Activated T-helper 1 cell treated with anti-CD3 and anti-CD28 coated beads, Interleukin-12 subunit alpha, Interleukin-12 subunit beta, Interleukin-2, Interleukin-4 antibody, amounts not matched to agents 30 ng/mL and 10 ng/mL and 1 ng/mL, durations not matched to agents 14 hours and 24 hours and 36 hours (primary cell): ENCODE measurements at regions of chr10 and their contacts with region 1.

Region 1: DNA sequence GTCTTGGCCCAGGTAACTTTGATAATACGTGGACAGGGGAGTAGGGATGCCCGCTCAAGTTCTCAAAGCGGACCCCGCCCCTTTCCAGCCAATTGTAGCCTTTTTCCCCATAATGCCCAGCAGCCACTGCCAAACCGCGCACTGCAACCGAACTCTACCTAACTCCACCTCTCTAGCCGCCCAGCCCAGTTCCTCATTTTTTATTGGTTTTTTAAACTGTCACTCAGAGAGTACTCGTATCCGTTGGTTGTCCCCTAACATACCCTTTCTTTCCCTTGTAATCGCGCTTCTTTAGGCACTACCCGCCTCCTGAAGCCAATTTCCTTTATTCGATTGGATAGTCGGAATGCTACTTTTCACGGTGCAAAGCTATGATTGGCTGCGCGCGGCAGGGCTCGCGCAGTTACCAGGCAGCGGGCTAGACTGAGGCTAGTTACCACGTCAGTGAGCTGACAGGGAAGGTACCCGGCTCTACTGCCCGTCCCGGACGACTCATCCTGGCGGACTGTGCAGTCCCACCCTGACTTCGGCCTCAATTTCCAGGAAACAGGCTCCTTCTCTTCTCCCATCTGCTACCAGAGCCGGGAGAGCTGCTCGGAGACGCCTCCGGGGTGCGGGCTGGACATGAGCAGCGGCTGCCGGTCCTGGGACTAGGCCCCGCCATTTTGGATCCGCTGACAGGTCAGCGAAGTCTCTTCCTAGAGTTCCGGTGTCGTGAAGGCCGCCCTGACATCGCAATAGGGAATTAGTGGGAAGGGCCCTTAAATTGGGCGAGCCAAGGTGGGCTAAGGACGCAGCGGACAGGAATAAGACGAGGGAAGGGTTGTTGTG is at the start of gene GBF1:
- DNase-seq: peak; percentile 90
- H3K4me3 Mint-ChIP-seq: peak within 1 kb of the TSS; percentile 96
- H3K27ac Mint-ChIP-seq: peak within 1 kb of the TSS; percentile 91
- H3K4me1 Mint-ChIP-seq: peaks cover 38% of the 10 kb centered on the region
- H3K27me3 Mint-ChIP-seq: peaks cover 9% of the 10 kb centered on the region
- total RNA-seq, gene GBF1: 46.7 TPM in 2 replicates

Region 2: DNA sequence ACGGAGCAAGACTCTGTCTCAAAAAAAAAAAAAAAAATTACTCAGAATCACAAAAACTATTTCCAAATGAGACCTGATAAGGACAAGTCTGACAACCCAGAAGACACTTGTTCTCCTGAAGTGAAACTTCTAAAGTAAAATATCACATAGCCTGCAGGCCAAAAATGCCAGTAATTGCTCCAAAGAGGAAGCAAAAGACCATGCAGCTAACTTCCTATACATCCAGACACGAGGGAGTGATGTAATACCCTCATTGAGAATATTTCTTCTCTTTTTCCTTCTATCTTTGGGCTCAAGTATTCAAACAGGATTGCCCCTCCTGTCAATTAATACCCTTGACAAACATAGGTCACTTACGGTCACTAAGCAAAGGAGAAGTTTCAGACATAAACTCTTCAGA is 220.5 kb before region 1 on chr10:
- intact Hi-C with region 1: no loop called
- DNase-seq: no peak
- H3K4me3 Mint-ChIP-seq: no peak overlapping the region
- H3K27ac Mint-ChIP-seq: no peak overlapping the region
- H3K4me1 Mint-ChIP-seq: no peaks in the 10 kb centered on the region
- H3K27me3 Mint-ChIP-seq: no peaks in the 10 kb centered on the region

Region 3: GRCh38 chr10:102132563-102133372 is 112.5 kb before region 1 on chr10 and contains the start of gene PPRC1:
- intact Hi-C with region 1: loop called (anchors 1 kb)
- DNase-seq: peak; percentile 97
- H3K4me3 Mint-ChIP-seq: peak within 1 kb of the TSS; percentile 95
- H3K27ac Mint-ChIP-seq: peak within 1 kb of the TSS; percentile 94
- H3K4me1 Mint-ChIP-seq: peaks cover 29% of the 10 kb centered on the region
- H3K27me3 Mint-ChIP-seq: no peaks in the 10 kb centered on the region
- total RNA-seq, gene PPRC1: 112 and 115 TPM in 2 replicates

Region 4: GRCh38 chr10:102159051-102159597 is 86.2 kb before region 1 on chr10:
- intact Hi-C with region 1: no loop called
- DNase-seq: no peak
- H3K4me3 Mint-ChIP-seq: no peak overlapping the region
- H3K27ac Mint-ChIP-seq: no peak overlapping the region
- H3K4me1 Mint-ChIP-seq: peaks cover 15% of the 10 kb centered on the region
- H3K27me3 Mint-ChIP-seq: no peaks in the 10 kb centered on the region

Region 5: DNA sequence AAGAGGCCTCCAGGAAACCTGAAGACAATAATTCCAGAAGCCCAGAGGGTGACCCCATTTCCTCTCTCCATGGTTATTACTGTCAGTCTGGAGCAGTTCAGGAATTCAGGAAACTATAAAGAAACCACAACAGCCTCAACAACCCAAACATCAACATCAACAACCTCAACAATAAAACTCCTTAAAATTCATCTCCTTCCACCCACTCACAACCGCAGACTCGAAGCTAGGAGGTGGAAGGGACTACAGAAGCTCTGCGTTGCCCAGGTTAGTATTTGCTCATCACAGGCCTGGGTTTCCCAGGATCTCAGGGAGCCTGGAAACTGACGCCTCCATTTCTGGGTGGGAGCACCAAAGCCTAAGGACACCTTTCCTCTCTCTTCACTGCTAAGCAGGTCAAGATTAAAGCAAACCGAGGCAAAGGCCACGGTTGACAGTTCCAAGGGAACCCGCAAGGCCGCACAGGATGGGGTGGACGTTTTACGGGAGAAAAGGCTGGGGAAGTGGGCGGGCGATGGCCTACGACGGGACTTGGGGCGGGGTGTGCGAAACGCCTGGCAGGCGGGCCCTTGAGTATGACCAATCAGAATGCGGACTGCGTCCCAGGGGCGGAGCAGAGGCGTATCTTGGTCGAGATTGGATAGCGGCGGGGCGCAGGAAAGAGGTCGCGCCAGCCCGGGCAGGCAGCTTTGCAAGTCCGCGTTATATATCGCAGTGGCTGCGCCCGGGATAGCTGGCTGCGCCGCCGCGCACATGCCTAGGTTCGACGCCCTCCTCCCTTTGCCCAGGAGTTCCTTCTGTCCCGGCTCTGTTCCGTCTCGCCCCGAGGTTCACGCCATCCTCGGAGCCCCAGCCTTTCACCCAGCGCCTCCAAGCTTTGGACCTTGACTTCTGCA is 19.4 kb before region 1 on chr10 and contains the start of gene ELOVL3:
- intact Hi-C with region 1: loop called (anchors 1 kb)
- DNase-seq: peak; percentile 87
- H3K4me3 Mint-ChIP-seq: peak within 1 kb of the TSS; percentile 63
- H3K27ac Mint-ChIP-seq: no peak within 1 kb of the TSS
- H3K4me1 Mint-ChIP-seq: peaks cover 21% of the 10 kb centered on the region
- H3K27me3 Mint-ChIP-seq: peaks cover 57% of the 10 kb centered on the region
- total RNA-seq, gene ELOVL3: 0.18 TPM in 1 of 2 replicates, not detected in the other

Region 6: DNA sequence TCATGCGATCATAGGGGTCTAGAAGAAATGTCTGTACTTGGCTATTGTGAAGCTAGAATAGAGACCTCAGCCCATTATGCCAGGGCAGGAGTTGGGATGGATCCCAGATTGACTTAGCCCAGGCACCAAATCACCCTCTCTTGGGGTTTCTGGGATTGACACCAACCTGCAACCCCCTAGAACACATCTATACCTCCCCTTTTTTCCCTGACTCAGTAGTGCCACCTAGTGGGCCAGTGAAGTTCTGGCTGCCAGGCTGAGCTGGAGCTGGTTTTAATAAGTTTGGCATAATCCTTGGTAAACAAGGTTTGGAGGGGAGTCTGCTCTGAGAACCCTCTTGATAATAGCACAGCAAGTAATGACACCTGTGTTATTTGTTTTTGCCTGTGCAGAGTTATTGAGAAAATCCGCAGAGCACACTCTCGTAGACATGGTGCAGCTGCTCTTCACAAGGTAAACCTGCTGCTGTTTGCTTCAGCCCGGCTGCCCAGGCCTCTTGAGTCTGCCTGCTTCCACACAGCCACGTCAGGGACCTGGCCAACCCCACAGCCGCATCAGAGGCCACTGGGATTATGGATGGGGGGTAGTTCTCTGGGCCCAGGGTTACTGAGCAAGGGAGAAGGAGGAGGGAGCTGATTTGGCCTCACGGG is 106.9 kb after region 1 on chr10:
- intact Hi-C with region 1: loop called (anchors 1 kb)
- DNase-seq: peak; percentile 41
- H3K4me3 Mint-ChIP-seq: no peak overlapping the region
- H3K27ac Mint-ChIP-seq: no peak overlapping the region
- H3K4me1 Mint-ChIP-seq: no peaks in the 10 kb centered on the region
- H3K27me3 Mint-ChIP-seq: no peaks in the 10 kb centered on the region

Region 7: DNA sequence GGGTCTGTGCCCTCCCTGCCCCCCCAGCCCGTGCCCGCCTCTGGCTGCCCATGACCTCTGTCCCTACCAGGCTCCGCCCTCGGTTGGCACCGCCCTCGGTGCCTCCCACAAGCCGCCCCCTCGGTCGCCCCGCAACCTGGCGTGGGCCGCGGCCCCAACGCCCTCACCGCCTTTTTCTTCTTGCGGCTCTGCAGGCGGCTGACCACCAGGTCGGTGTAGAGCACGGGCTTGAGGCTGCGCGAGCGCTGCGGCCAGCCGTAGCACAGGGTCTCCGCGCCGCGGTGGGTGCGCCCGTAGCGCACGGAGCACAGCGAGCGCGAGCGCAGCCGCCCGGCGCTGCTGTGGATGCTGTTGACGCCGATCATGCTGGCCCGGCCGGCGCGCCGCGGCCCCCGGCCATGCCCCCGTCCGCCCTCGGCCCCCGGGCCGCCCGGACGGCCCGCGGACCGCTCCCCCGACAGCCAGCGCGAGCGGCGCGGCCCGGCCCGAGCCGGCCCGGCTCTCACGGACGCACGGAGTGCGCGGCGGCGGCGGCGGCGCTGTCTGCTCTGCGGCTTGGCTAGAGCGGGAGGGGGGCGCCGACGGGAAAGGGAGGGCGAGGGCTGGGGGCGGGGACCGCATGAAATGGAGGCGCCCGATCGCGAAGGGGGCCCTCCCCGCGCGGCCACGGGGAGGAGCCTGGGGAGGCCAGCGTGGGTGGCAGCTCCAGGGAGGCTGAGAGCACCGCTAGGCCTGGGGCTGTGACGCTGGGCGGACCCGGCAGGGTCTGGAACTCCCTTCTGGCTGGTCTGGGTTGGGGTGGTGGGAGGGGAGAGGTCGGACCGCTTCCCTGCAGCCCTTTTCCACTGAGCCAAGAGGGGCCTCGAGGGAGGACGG is 163.7 kb after region 1 on chr10:
- intact Hi-C with region 1: no loop called
- DNase-seq: peak; percentile 64
- H3K4me3 Mint-ChIP-seq: peak overlapping the region; percentile 87
- H3K27ac Mint-ChIP-seq: peak overlapping the region; percentile 81
- H3K4me1 Mint-ChIP-seq: peaks cover 54% of the 10 kb centered on the region
- H3K27me3 Mint-ChIP-seq: peaks cover 24% of the 10 kb centered on the region

Region 8: DNA sequence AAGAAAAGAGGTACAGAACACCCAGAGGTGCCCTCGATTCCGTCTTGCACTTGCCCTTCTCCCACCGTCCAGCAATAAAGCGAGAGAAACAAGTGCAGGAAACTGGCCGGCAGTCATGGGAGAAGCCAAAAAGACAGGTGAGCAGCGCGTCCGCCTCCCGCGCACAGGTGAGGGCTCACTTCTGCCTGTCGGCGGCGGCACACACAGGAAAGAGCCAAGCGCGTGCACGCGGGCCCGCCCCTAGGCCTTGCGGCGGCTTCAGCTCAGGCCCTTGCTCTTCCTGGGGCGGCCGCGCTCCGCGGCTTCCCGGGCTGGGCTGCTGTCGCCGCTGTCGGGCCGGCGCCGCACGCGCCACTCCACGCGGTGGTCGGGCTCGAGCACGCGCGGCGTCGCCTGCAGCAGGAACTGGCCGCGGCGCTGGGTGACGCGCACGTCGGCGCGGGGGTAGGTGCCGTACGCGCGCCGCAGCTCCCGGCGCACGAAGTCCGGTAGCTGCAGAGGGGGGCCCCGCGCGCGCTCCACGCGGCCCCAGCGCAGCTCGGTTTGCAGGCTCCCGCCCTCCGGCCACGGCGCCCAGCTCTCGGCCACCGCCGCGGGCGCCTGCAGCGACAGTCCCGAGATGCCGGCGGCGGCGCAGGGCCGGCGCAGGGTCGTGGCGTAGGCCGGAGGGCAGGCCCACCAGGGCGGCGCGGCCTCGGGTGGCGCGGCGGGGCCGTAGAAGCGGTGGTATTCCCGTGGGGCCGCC is 205.1 kb after region 1 on chr10:
- intact Hi-C with region 1: loop called (anchors 1 kb)
- DNase-seq: peak; percentile 88
- H3K4me3 Mint-ChIP-seq: peak overlapping the region; percentile 95
- H3K27ac Mint-ChIP-seq: peak overlapping the region; percentile 90
- H3K4me1 Mint-ChIP-seq: peaks cover 33% of the 10 kb centered on the region
- H3K27me3 Mint-ChIP-seq: no peaks in the 10 kb centered on the region

Region 9: DNA sequence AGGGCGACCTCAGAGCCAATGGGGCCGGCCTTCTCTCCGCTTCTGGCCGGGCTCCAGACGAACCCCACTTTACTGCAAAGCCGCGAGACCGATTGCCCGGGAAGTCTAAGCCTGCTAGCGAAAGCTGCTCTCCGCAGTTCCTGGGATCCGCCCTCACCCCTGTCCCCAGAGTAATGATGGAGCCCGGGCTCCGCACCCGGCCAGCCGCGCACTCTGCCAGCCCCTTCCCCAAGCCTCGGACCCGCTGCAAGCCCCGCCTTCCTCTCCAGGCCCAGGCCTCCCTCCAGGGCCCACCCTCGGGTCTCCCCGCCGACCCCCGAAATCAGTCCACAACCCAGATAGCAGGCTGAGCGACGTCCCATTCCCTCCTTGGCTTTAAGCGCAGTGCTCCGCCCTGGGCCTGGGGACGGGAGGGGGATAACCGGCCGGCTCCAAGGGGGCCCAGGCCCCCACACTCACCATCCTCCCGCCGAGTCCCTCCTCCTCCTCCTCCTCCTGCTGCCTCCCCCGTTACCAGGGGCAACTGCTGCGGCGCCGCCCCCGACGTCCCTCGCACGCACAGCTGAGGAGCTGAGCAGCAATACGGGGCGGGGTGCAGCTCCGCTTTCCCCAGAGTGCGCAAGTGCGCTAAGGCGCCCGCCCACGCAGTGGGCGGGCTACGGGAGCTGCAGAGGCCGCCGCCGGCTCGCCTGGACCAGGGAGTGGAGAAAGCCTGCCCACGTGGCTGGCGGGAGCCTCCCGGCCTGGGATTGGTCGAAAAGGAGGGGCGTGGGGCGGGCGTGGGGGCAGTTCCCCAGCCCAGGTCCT is 468.7 kb after region 1 on chr10 and contains the start of gene ARL3:
- intact Hi-C with region 1: loop called (anchors 10 kb)
- DNase-seq: peak; percentile 95
- H3K4me3 Mint-ChIP-seq: peak within 1 kb of the TSS; percentile 88
- H3K27ac Mint-ChIP-seq: peak within 1 kb of the TSS; percentile 91
- H3K4me1 Mint-ChIP-seq: peaks cover 52% of the 10 kb centered on the region
- H3K27me3 Mint-ChIP-seq: no peaks in the 10 kb centered on the region
- total RNA-seq, gene ARL3: 6.6 and 6.8 TPM in 2 replicates